ENCODE measurements at regions of chr1 and their contacts with region 1.

Region 1: DNA sequence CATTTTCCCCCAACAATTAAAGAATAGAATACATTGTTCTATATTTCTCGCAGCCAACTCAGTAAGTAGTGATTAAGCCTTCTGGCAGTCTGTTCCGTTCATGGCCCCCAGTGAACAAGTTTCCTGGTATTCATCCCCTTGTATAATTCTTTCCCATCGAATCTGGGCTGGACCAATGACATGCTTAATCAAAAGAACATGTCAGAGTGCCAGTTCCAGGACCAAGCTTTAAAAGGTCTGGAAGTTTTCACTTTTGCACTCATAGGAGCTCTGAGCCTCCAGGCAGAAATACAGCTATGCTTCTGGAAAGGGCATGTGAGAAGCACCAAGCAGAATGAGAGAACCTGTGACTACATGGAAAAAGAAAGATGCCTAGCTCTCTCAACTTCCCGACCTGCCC is 22.5 kb upstream of the DPYD start:
- H3K4me3 ChIP-seq: no peak overlapping the region
- H3K27ac ChIP-seq: no peak overlapping the region
- H3K4me1 ChIP-seq: no peaks in the 10 kb centered on the region
- CTCF ChIP-seq: no peak

Region 2: DNA sequence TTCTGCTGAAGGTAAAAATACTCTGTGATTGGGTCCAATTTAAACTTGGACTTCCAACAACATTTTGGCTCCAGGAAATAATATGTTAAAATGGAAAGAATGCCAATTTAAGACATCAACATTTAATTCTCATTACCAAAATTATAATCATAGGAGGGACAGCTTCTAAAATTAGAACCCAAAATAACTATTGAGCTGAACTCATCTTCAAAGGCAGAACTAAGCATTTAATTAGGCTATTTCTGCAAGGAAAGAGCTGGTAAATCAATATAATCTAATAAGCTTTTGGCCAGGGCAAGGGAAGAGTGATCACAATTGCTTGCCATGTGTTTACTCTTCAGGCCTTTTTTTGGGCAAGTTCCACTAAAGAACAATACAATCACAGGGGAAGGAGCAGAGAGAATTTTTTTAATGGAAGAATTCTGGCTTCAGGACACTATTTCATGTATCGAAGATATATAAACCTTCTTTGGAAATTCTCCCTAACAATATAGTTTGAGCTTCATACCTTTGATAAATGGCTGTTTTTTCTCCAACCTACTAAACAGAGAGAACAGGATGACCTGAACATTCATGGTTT is 1354.8 kb before region 1 on chr1:
- CTCF ChIA-PET with region 1: interaction called, 10 read pairs
- POLR2A ChIA-PET with region 1: no interaction called
- H3K4me3 ChIP-seq: no peak overlapping the region
- H3K27ac ChIP-seq: no peak overlapping the region
- H3K4me1 ChIP-seq: no peaks in the 10 kb centered on the region
- CTCF ChIP-seq: no peak

Region 3: DNA sequence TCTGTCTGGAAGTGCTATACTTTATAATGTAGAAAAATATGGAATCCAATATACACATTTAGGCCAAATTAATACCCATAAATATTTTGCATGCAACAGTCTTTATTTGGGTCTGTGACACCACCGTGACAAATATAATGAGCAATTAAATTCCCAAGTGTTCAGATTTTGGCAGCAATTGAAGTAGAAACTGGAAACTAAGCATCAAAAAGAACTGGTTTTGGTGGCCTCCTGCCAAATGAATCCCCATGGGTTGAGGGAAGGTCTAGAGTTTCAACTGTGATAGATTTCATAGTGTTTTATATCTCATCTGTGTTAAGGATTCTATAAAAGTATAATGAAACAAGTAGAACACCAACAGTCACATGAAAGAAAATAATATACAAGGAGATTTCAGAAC is 110.9 kb before region 1 on chr1:
- CTCF ChIA-PET with region 1: no interaction called
- POLR2A ChIA-PET with region 1: no interaction called
- H3K4me3 ChIP-seq: no peak overlapping the region
- H3K27ac ChIP-seq: no peak overlapping the region
- H3K4me1 ChIP-seq: peaks cover 10% of the 10 kb centered on the region; the same call in 1 of the 2 replicates
- CTCF ChIP-seq: no peak